ENCODE measurements at regions of chr2 and their contacts with region 1.

Region 1: GRCh38 chr2:11636593-11637362 is 33.2 kb downstream of the NTSR2 start:
- DNase-seq: no peak
- H3K4me3 ChIP-seq: no peak overlapping the region
- CTCF ChIP-seq: no peak

Region 2: DNA sequence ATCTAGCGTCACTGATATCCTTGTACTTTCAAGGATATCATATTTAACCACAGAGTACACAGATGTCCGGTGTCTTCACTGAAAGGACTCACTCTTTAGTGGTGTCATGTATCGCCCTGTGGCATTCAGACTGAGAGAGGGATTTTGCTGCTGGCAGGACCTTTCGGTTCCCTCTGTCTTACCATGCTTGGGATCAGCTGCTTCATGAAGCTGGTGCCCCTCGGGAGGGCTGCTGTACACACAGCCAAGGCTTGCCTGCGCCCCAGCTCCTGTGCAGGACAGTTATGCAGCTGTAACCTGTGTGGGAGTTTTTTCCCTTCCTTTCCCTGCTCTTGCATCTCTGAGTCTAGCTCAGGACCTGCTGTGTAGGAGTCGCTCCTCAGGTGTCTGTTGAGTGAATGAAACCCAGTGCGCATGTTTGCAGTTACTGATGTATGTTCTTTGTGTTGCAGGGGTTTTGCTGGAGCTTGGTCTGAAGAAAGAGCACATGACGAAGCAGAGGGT is 38.5 kb before region 1 on chr2:
- in situ Hi-C with region 1: loop called (anchors 5 kb)
- DNase-seq: no peak
- H3K4me3 ChIP-seq: no peak overlapping the region
- CTCF ChIP-seq: no peak

Measured in astrocyte of the cerebellum (primary cell).